WTC11 (cell line): ENCODE measurements at regions of chr2 and their contacts with region 1.

Region 1: DNA sequence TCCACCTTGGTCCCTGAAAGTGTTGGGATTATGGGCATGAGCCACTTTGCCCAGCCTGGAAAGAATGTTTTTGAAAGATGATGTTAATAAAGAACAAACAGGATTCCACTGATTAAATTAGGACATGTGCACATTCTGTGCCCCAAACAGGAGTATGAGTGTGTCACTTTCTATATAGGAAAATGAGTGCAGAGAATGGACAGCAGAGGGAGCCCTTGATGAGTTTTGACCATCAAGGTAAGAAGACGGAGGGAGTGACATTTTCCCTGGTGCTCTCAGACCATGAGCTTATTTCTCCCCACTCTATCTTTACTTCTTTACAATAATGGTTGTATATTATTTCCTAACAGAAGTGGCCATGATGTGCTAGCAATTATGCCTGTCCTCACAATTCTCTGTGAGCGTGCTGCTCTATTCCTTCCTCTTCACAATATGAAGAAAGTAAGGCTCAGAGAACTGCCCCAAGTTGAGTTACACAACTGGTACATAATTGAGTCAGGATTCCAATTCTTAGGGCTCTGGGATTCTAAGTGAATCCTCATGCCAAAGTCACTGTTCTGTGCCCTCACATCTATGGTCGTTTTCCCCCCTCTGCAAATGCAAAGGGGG is 20.6 kb downstream of the RPL37A start:
- DNase-seq: peak; percentile 59
- ATAC-seq: peak; percentile 81
- H3K4me3 Mint-ChIP-seq: no peak overlapping the region
- H3K27ac Mint-ChIP-seq: no peak overlapping the region
- H3K4me1 Mint-ChIP-seq: peaks cover 6% of the 10 kb centered on the region
- H3K27me3 Mint-ChIP-seq: no peaks in the 10 kb centered on the region
- CTCF ChIP-seq: peak; percentile 70

Region 2: DNA sequence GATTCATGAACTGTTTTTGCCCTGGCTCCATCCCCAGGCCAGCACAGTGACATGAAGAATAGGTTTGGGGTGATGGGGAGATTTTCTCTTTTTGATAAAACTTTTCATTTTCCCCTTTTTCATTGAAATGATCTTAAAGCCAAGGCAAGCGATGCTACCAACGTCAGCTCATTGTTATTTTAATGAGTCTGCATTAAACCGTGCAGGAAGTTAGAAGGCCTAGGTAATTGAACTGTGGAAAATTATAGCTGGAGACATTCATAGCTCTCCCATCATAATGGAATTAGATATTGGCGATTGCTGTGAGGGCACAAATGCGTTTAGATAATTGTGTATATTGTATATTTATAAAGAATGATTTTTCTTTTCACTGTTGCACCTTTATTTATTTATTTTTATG is 73.8 kb before region 1 on chr2:
- CTCF ChIA-PET with region 1: no interaction called
- POLR2A ChIA-PET with region 1: no interaction called
- DNase-seq: no peak
- ATAC-seq: no peak
- H3K4me3 Mint-ChIP-seq: no peak overlapping the region
- H3K27ac Mint-ChIP-seq: no peak overlapping the region; the same call in 1 of the 2 replicates
- H3K4me1 Mint-ChIP-seq: peaks cover 17% of the 10 kb centered on the region
- H3K27me3 Mint-ChIP-seq: no peaks in the 10 kb centered on the region
- CTCF ChIP-seq: no peak

Region 3: DNA sequence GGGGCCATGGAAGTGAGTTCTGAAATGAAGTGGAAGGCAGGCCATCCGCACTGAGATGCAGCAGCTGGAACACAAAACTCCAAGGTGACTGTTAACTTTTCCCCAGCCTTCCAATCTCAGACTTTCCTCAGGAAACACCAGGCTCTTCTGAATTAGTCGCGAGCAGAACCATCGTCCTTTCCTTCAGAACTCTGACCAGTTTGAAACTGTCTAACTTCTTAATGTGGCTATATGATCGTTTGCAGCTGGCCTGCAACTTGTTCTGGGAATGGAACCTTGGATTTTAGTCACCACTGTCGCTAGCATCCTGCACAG is 21.2 kb before region 1 on chr2:
- CTCF ChIA-PET with region 1: no interaction called
- POLR2A ChIA-PET with region 1: no interaction called
- DNase-seq: no peak
- ATAC-seq: no peak
- H3K4me3 Mint-ChIP-seq: peak overlapping the region; percentile 96
- H3K27ac Mint-ChIP-seq: peak overlapping the region; percentile 80
- H3K4me1 Mint-ChIP-seq: peaks cover 40% of the 10 kb centered on the region
- H3K27me3 Mint-ChIP-seq: no peaks in the 10 kb centered on the region
- CTCF ChIP-seq: no peak

Region 4: DNA sequence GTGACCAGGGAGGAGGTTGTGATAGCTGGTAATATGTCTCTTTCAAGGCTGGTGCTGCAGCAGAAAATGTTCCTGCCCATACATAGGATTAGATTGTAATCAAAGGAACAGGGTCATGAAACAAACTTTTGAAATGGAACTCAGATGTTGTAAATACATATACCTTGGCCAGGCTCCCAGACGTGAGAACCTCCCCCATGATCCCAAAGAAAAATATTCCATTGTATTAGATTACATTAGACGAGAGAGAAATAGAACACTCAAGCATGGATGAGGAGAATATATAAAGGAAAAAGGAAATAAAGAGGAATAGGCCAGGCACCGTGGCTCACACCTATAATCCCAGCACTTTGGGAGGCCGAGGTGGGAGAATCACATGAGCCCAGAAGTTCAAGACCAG is 32.0 kb after region 1 on chr2:
- CTCF ChIA-PET with region 1: no interaction called
- POLR2A ChIA-PET with region 1: no interaction called
- DNase-seq: no peak
- ATAC-seq: no peak
- H3K4me3 Mint-ChIP-seq: no peak overlapping the region
- H3K27ac Mint-ChIP-seq: peak overlapping the region; percentile 42; the same call in 1 of the 2 replicates
- H3K4me1 Mint-ChIP-seq: peaks cover 34% of the 10 kb centered on the region
- H3K27me3 Mint-ChIP-seq: no peaks in the 10 kb centered on the region
- CTCF ChIP-seq: no peak

Region 5: DNA sequence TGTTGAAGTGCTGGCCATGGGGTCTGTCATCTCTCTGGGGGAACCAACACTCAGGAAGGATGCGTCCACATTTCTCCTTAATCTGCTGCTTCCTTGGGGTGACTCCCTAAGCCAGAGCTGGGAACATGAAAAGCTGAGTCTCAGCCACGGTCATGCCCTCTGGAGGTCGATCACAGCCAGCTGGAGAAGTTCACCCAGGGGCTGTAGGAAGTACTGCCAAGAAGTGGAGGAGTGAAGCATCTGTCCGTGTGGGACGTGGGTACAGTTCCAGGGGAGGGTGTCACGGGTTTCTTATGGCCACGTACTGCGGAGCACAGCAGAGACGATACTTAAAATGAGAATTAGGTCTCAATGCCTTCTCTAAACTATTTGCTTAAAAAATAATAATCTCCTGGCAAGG is 71.5 kb after region 1 on chr2:
- CTCF ChIA-PET with region 1: interaction called, 25 read pairs
- POLR2A ChIA-PET with region 1: no interaction called
- DNase-seq: peak; percentile 26
- ATAC-seq: peak; percentile 91
- H3K4me3 Mint-ChIP-seq: no peak overlapping the region
- H3K27ac Mint-ChIP-seq: no peak overlapping the region
- H3K4me1 Mint-ChIP-seq: peaks cover 29% of the 10 kb centered on the region
- H3K27me3 Mint-ChIP-seq: no peaks in the 10 kb centered on the region
- CTCF ChIP-seq: no peak

Region 6: GRCh38 chr2:216632952-216633615 is 113.8 kb after region 1 on chr2 and contains the start of gene IGFBP2:
- CTCF ChIA-PET with region 1: interaction called, 15 read pairs
- POLR2A ChIA-PET with region 1: interaction called, 5 read pairs
- DNase-seq: peak; percentile 84
- ATAC-seq: peak; percentile 65
- H3K4me3 Mint-ChIP-seq: peak within 1 kb of the TSS; percentile 99
- H3K27ac Mint-ChIP-seq: peak within 1 kb of the TSS; percentile 97
- H3K4me1 Mint-ChIP-seq: peaks cover 56% of the 10 kb centered on the region
- H3K27me3 Mint-ChIP-seq: peaks cover 13% of the 10 kb centered on the region
- CTCF ChIP-seq: no peak
- total RNA-seq, gene IGFBP2: 514 to 873 TPM (median 854 TPM) in 3 replicates

Region 7: GRCh38 chr2:216659276-216659675 is 140.0 kb after region 1 on chr2:
- CTCF ChIA-PET with region 1: interaction called, 244 read pairs
- POLR2A ChIA-PET with region 1: no interaction called
- DNase-seq: no peak
- ATAC-seq: no peak
- H3K4me3 Mint-ChIP-seq: no peak overlapping the region
- H3K27ac Mint-ChIP-seq: peak overlapping the region; percentile 87
- H3K4me1 Mint-ChIP-seq: peaks cover 52% of the 10 kb centered on the region
- H3K27me3 Mint-ChIP-seq: no peaks in the 10 kb centered on the region
- CTCF ChIP-seq: no peak